Ascending aorta (tissue), 2 donors: ENCODE measurements at regions of chr7 and their contacts with region 1.

Region 1: DNA sequence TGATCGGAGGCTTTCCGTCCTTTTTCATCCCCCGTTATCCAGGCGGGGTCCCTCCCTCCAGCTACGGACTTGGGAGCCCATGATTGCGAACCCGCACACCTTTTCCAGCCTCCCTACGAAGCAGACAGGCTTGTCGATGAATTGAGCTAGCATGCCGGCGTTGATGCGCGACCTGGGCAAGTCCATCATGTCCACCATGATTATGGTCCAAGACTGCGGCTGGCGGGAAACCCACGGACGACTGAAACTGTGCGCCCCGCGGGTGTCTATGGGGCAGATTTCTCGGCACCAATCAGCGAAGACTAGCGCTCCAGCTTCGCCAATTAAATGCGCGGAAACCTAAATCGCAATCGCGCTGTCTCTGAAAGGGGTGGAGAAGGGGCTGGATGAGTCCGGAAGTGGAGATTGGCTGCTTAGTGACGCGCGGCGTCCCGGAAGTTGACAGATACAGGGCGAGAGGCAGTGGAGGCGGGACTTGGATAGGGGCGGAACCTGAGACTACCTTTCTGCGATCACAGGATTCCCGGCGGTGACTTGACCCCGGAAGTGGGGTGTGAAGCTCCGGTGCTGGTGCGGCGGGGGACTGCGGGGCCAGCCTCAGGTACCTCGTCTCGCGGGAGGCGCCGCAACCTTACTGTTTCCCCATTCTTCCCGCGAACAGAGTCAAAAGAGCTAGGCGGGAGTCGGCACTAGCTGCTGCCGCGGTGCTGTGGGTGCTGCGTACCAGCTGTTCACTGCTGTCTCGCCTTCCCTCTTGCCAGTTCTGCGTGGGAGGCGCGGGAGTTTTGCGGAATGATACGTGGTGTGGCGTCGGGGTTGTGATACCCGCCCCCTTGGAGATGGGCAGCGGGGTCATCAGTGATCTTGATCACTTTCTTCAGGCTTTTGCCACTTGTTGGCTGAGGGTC is at the start of gene UMAD1:
- DNase-seq: peak; percentile 98 to 99
- H3K4me3 ChIP-seq: peak within 1 kb of the TSS; percentile 77 to 84
- H3K27ac ChIP-seq: peak within 1 kb of the TSS; percentile 86 to 90
- H3K4me1 ChIP-seq: peaks cover 0 to 9% of the 10 kb centered on the region in 2 donors
- H3K27me3 ChIP-seq: no peaks in the 10 kb centered on the region
- CTCF ChIP-seq: no peak
- total RNA-seq, gene UMAD1: 17.7 TPM

Region 2: GRCh38 chr7:6706677-6707544 is 933.6 kb before region 1 on chr7 and contains the start of gene ZNF12:
- intact Hi-C with region 1: loop called (anchors 5 kb)
- DNase-seq: peak; percentile 76 to 98
- H3K4me3 ChIP-seq: peak within 1 kb of the TSS; percentile 94 to 100
- H3K27ac ChIP-seq: peak within 1 kb of the TSS; percentile 80 to 88
- H3K4me1 ChIP-seq: peaks cover 7 to 16% of the 10 kb centered on the region in 2 donors
- H3K27me3 ChIP-seq: no peaks in the 10 kb centered on the region
- CTCF ChIP-seq: no peak
- total RNA-seq, gene ZNF12: 28.8 TPM

Region 3: DNA sequence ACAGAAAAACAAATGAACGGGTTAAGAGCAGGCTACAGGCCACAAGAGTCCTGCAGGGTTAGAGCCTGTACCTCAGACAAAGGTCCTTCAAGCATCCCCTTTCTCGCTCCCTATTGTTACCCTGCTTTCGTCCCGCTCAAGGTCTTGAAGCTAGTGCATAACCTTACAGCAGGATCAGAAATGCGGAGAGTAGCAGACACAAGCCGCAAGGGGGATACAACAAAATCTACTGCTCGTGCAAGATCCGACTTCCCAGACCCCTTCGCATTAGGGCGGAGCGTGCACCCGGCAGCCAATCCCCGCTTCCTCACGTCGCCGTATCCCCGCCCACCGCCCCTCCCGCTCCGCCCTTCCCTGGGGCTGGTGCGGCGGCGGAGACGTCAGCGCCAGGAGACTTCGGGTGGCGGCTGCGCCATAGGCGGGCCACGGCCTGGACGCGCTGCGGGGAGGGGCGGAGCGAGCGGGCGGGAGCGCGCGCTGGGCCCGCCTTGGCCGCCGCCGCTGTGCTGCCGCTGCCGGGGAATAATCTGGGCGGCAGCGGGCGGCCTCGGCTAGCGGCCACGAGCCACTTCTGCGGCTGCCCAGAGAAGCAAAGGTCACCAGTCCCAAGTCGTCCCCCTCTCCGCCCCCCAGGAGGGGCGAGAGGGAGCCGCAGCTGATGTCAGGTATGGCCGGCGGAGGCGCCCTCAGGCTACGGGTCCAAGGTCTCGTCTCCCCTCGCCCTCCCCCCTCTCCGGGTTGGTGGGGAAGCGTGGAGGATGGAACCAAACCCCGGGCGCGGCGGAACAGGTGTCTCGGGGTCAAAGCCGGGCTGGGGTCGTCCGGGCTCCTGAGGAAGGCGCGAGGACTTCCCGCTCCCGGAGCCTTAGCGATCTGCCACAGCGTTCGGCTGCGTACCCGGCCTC is 458.1 kb before region 1 on chr7 and contains the start of gene C1GALT1:
- intact Hi-C with region 1: loop called (anchors 2 kb)
- DNase-seq: peak; percentile 90 to 98
- H3K4me3 ChIP-seq: peak within 1 kb of the TSS; percentile 87 to 93
- H3K27ac ChIP-seq: peak within 1 kb of the TSS; percentile 89 to 94
- H3K4me1 ChIP-seq: peaks cover 0 to 7% of the 10 kb centered on the region in 2 donors
- H3K27me3 ChIP-seq: no peaks in the 10 kb centered on the region
- CTCF ChIP-seq: peak in 2 of 3 experiments; percentile 26 to 44
- total RNA-seq, gene C1GALT1: 11.0 TPM

Region 4: GRCh38 chr7:7498856-7499580 is 141.5 kb before region 1 on chr7:
- intact Hi-C with region 1: no loop called
- DNase-seq: no peak
- H3K4me3 ChIP-seq: no peak overlapping the region
- H3K27ac ChIP-seq: no peak overlapping the region
- H3K4me1 ChIP-seq: no peaks in the 10 kb centered on the region
- H3K27me3 ChIP-seq: no peaks in the 10 kb centered on the region
- CTCF ChIP-seq: no peak

Region 5: DNA sequence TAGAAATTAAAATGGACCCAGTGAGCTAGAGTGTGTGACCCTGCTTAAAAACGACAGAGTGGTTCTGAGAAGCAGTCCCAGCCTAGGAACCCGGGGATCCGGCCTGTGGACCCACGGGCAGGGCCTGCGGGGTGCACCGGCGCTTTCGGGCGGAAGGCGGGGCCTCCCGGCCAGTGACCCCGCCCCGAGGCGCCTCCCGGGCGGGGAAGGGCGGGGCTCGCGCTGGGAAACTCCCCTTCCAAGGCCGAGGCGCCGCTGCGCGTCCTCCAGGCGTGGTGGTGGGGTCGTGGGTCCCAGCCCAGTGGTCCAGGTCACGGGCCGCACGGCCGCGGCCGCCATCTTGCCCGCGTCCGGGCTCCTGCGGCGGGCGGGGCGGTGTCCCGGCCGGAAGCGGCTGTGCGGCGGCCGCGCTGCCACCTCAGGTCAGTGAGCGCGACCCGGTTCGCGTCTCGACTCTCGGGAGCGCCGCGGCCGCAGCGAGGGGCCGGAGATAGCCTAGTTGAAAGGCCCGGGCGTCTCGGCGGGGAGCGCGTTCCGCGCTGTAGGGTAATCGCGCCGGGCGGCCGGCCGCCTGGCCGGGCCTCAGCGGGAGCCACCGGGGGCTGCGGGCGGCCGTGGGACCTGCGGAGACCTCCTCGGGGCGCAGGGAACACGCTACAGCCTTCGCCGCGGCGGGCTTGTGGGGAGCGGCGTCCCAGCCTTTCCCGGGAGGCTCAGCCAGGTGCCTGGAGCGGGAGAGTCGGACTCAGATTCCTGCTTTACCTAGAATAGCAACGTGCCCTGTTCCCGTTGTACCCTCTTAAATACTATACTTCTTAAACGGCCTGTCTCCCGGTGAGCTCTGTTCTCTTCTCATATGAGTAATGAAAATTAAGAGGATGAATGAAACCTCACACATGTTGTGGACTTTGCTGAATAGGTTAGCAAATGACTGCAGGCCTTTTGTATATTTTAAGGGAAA is 73.5 kb before region 1 on chr7 and contains the start of gene MIOS:
- intact Hi-C with region 1: loop called (anchors 1 kb)
- DNase-seq: peak; percentile 10 to 90
- H3K4me3 ChIP-seq: peak within 1 kb of the TSS; percentile 85 to 93
- H3K27ac ChIP-seq: peak within 1 kb of the TSS; percentile 94 to 95
- H3K4me1 ChIP-seq: peaks cover 5 to 12% of the 10 kb centered on the region in 2 donors
- H3K27me3 ChIP-seq: no peaks in the 10 kb centered on the region
- CTCF ChIP-seq: no peak
- total RNA-seq, gene MIOS: 14.6 TPM

Region 6: DNA sequence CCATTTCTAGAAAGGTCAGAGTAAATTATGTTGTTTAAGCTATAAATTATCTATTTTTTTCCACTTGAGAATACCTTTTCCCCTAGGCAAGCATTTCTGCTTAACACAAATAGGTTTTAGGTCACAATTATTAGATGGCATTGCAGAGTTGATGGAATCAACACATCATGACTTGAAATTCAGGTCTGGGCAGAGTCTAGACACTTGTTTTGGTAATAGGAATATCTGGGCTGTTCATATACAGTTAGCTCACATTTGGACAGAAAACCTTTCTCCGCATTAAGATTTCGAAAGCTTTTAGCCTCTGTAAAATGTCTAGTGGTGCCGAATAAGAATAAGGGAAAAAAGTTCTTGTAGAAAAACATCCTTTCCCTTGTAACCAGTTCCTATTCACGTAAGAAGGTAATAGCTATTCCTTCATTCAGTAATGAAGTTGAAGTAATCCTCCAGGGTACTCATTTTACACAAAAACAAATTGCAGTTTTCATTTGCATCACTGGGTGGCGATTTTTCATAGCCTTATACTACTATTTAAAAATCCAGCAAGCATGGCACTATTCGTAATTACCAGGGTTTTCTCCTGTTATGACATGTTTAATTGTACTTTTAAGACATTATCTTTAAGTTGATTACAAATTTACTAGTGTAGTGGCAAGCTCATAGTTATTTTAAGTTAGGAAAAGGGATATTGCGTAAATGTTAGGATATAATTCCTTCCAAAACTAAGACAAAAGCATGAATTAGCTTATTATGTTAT is 40.9 kb after region 1 on chr7:
- intact Hi-C with region 1: loop called (anchors 2 kb)
- DNase-seq: no peak
- H3K4me3 ChIP-seq: peak overlapping the region in 1 of 2 donors; percentile 25
- H3K27ac ChIP-seq: peak overlapping the region; percentile 2 to 5
- H3K4me1 ChIP-seq: peaks cover 0 to 5% of the 10 kb centered on the region in 2 donors
- H3K27me3 ChIP-seq: no peaks in the 10 kb centered on the region
- CTCF ChIP-seq: peak; percentile 45 to 72 (median 55)

Region 7: DNA sequence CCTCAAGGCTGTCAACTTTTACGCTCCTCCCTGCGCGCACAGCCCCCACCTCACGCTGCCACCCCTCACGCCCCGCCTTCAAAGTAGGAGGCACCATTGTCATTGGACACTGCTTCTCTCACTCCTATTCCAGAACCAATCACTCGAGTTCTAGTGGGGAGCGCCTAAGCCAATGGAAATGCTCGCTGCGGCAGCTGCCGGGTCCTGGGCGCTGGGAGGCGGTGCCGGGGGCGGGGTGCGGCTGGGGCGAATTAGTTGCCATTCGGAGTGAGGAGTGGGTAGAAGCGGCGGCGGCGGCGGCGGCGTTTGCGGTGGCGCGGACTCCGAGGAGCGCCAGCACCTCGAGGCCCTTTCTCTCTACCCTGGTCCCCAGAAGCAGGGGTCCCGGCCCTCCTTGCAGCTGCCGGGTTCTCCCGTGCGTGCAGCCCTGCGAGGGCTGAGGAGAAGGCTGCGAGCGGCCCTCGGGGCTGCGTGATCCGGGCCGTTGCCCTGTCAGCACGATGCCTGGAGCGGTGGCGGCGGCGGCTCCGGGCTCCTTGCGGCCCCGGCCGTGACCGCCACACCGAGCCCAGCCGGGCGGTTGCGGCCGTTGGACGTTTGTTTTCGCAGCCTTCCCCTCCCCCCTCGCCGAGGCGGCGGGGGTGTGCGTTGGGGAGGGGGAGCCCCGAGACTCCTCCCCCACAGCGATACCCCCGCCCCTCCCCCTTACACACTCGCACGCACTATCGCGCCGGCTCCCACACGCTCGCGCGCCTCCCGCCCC is 328.2 kb after region 1 on chr7 and contains the start of gene GLCCI1:
- intact Hi-C with region 1: loop called (anchors 1 kb)
- DNase-seq: peak; percentile 94 to 98
- H3K4me3 ChIP-seq: peak within 1 kb of the TSS; percentile 95 to 99
- H3K27ac ChIP-seq: peak within 1 kb of the TSS; percentile 92 to 99
- H3K4me1 ChIP-seq: peaks cover 0 to 9% of the 10 kb centered on the region in 2 donors
- H3K27me3 ChIP-seq: no peaks in the 10 kb centered on the region
- CTCF ChIP-seq: no peak
- total RNA-seq, gene GLCCI1: 0.21 TPM

Region 8: DNA sequence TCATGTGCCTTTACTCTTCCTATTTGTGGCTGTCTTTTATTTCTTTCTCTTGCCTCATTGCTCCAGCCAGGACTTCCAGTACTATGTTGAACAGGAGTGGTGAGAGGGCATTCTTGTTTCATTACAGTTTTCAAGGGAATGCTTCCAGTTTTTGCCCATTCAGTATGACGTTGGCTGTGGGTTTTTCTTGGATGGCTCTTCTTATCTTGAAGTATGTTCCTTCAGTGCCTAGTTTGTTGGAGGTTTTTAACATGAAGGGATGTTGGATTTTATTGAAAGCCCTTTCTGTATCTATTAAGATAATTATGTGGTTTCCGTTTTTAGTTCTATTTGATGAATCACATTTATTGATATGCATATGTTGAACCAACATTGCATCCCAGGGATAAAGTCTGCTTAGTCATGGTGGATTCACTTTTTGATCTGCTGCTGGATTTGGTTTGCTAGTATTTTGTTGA is 424.9 kb after region 1 on chr7:
- intact Hi-C with region 1: loop called (anchors 10 kb)
- DNase-seq: peak in 1 of 2 donors; percentile 64
- H3K4me3 ChIP-seq: peak overlapping the region in 1 of 2 donors; percentile 43
- H3K27ac ChIP-seq: peak overlapping the region; percentile 84 to 90
- H3K4me1 ChIP-seq: peaks cover 5 to 17% of the 10 kb centered on the region in 2 donors
- H3K27me3 ChIP-seq: no peaks in the 10 kb centered on the region
- CTCF ChIP-seq: no peak